ENCODE measurements at regions of chr9 and their contacts with region 1.

Region 1: GRCh38 chr9:127187231-127187956 is 65.0 kb upstream of the ANGPTL2 start:
- DNase-seq: peak; percentile 83
- ATAC-seq: peak; percentile 32 to 86

Region 2: DNA sequence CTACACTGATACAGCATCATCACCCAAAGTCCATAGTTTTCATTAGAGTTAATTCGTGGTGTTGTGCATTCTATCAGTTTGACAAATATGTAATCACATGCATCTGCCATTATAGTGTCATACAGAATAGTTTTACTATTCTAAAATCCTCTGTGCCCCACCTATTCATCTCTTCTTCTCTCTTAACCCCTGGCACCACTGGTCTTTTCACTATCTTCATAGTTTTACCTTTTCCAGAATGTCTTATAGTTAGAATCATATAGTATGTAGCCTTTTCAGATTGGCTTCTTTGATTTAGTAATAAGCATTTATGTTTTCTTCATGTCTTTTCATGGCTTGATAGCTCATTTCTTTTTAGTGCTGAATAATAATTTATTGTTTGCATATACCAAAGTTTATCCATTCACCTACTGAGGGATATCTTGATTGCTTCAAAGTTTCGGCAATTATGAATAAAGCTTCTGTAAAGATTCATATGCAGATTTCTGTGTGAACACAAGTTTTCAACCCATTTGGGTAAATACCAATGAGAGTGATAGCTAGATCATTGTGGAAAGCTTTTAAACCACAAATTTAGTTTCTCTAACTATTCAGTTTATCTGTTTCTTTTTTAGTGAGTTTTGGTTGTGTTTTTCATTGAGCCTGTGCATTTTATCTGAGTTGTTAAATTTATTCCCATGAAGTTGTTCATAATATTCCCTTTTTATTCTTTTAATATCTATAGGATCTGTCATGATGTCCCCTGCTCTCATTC is 187.9 kb before region 1 on chr9:
- intact Hi-C with region 1: no loop called
- DNase-seq: no peak
- ATAC-seq: no peak

Region 3: DNA sequence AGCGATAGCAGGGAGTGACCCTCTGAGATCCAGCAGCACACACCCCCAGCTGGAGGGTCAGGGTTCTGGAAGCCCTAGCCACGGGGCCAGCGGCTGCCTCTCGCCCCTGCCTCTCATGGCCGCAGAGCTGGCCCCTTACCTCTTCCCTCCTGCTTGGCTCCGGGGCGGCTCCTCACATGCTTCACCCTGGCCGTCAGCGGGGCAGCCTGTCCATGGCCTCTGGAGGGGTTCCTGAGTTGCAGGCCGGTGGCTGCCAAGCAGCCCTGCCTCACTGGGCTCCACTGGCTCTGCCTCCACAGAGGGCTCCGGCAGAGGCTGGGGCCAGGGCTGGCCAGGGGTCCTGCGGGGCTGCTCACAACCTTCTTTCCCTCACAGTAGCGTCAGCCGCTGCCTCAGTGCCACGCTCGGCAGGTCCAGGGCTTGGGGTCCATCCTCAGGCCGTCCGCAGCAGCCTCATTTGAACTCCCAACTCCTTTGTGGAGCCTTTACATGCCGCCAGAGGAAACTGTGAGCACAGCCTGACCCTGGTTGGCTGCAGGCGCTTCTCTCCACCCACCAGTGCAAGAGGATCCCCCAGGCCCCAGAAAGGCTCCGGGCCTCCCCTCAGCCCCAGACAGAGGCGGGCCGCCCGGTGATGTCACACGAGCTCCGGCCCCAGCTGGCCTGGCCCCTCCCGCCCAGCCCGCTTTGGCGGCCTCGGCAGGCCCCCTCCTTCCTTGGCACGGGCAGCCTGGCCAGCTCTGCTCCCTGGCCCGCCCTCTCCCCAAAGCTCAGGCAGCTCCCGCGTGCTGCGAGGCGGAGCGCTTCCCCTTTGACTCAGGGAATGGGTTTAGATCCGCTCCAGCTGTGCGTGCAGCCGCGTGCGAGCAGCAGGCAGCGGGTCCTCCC is 65.0 kb before region 1 on chr9 and contains the start of gene ANGPTL2:
- intact Hi-C with region 1: loop called (anchors 5 to 10 kb)
- DNase-seq: peak; percentile 94
- ATAC-seq: peak; percentile 92 to 96
- total RNA-seq, gene ANGPTL2: 51.8 to 63.1 TPM

Region 4: GRCh38 chr9:127136081-127136879 is 51.1 kb before region 1 on chr9:
- intact Hi-C with region 1: loop called in 1 of 2 experiments (anchors 5 kb)
- DNase-seq: no peak
- ATAC-seq: no peak

Region 5: DNA sequence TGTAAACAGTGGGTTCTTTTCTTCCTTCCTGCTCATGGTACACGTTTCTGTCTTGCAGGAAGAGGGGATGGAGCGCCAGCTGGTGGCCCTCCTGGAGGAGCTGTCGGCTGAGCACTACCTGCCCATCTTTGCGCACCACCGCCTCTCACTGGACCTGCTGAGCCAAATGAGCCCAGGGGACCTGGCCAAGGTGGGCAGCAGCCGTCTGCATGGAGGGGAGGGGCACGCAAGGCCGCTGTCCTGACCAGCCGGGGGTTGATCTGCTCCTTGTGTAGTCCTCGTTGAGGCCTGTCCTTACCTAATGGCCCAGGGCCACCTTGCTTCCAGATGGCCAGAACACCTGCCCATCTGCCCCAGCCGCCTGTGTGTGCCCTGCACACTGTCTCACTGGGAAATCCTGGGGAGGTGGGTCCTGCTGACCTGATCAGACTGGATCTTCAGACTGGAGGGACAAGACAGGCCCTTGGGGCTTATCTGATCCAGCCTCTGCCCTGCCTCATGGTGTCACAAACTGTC is 308.6 kb after region 1 on chr9:
- intact Hi-C with region 1: no loop called
- DNase-seq: no peak
- ATAC-seq: no peak

Measured in left cardiac atrium (tissue), 4 donors.